Vagina (tissue), 2 donors: ENCODE measurements at regions of chr2 and their contacts with region 1.

Region 1: GRCh38 chr2:4693266-4693812 is 990.0 kb downstream of the DCDC2C start:
- DNase-seq: no peak
- H3K4me3 ChIP-seq: no peak overlapping the region
- H3K27ac ChIP-seq: no peak overlapping the region
- H3K4me1 ChIP-seq: no peaks in the 10 kb centered on the region
- H3K27me3 ChIP-seq: no peaks in the 10 kb centered on the region
- CTCF ChIP-seq: no peak
- POLR2A ChIP-seq: no peak

Region 2: GRCh38 chr2:2806711-2807110 is 1886.6 kb before region 1 on chr2:
- intact Hi-C with region 1: loop called (anchors 10 kb)
- DNase-seq: peak in 1 of 2 donors; percentile 80
- H3K4me3 ChIP-seq: no peak overlapping the region
- H3K27ac ChIP-seq: no peak overlapping the region
- H3K4me1 ChIP-seq: no peaks in the 10 kb centered on the region
- H3K27me3 ChIP-seq: no peaks in the 10 kb centered on the region
- CTCF ChIP-seq: no peak
- POLR2A ChIP-seq: no peak